Tibial artery (tissue), 4 donors: ENCODE measurements at regions of chr11 and their contacts with region 1.

Region 1: DNA sequence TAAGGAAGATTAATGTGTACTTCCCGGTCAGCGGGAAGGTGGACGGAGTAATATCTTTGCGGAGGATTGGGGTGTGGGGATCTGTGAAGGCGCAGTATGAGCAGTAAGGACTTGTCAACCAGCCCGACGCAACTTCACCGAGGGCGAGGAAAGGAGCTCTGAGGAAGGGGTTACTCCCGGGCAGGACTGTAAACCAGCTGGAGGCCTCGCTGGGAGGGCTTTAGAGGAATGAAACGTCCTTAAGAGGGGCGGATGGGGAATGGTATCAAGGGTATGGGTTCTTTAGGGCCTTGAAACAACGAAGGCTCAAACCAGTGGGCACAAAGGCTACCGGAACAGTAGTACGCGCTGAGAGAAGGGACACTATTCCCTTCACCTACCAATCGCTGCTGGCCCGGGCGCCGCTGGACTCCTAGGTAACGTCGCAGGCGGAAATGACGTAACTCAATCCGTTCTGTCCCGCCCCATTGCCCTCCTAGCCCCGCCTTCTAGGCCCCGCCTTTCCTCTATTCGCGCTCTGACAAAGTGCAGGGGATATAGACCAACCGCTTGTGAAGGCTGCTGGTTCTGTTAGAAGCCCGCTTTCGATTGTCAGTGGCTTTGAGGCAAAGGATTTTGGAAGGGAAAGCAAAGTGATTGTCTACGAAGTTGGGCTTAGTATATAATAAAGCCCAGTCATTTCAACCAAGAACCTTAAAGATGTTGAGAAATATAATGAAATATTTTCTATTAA is at the start of gene C11orf65:
- DNase-seq: peak; percentile 96 to 98
- H3K4me3 ChIP-seq: peak within 1 kb of the TSS; percentile 59 to 65
- H3K27ac ChIP-seq: peak within 1 kb of the TSS; percentile 93 to 94
- H3K4me1 ChIP-seq: peaks cover 0 to 7% (median 2%) of the 10 kb centered on the region in 4 donors
- H3K27me3 ChIP-seq: no peaks in the 10 kb centered on the region
- CTCF ChIP-seq: no peak

Region 2: DNA sequence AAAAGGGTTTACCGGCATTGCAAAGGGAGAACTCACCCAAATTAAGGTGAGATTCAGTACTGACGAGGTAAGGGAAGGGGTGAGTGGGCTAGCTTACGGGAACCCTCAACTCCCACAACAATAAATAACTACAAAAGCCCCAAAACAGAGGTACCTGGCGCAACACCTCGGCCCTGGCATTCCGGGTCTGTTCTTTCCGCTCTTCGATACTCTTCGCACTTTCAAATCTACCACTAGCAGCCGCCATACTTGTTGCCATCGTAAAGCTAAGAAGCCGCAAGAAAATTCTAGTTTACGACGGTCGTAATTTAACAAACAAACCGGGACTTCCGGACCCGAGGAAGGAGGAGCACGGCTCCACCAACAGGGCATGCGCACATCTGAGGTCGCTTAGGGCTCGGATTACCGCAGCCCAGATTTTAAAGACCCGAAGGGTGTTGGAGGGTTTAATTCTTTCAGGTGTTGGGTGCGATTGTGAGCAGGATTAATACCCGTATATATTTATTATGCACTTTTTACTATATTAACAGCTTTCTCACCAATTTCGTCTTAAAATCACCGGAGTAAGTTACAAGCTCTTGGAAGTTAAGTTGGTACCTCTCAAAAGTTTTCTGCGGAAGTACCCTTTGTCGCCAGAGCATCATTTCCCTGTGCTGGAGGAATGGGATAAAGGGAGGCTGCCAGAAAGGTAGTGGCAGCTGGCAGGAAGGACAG is 1009.5 kb before region 1 on chr11 and contains the start of gene CWF19L2:
- intact Hi-C with region 1: loop called (anchors 10 kb)
- DNase-seq: peak; percentile 83 to 91
- H3K4me3 ChIP-seq: peak within 1 kb of the TSS; percentile 66 to 75
- H3K27ac ChIP-seq: peak within 1 kb of the TSS; percentile 71 to 74
- H3K4me1 ChIP-seq: peaks cover 0 to 16% (median 8%) of the 10 kb centered on the region in 4 donors
- H3K27me3 ChIP-seq: no peaks in the 10 kb centered on the region
- CTCF ChIP-seq: peak in 1 of 2 experiments; percentile 12

Region 3: DNA sequence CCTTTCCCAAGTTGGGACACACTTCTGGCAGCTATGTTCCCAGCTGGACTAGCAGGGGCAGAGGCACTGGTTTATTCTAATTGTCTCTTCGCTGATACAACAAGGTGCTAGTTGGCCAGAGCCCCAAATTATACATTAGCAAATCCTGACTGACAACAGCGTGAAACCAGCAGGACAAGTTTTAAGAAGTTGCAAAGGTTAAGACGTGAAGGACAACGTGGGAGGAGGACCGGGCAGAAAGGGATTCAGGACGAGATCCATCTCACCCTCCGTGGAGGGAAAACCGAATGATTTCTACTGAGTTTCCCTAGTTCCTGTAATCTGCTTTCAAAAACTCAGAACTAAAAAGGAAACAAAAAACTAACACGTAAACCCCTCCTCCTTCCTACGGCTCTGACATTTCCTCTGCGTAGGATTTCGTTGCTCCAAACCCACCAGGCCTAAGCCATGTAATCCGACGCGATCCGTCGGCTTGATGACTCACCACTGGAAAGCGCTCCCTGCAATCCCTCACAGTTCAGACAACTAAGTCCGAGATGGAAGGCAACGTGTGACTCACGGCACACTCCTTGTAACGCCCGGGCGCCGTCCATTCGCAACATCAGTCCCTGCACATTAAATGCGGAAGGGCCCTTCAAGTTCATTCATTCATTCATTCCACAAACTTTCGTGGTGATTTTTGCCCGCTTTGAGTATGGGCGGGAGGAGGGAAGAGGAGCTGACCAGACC is 30.2 kb after region 1 on chr11:
- intact Hi-C with region 1: loop called (anchors 2 kb)
- DNase-seq: peak; percentile 93 to 94
- H3K4me3 ChIP-seq: peak overlapping the region; percentile 68 to 96
- H3K27ac ChIP-seq: peak overlapping the region; percentile 87 to 97
- H3K4me1 ChIP-seq: peaks cover 0 to 14% (median 6%) of the 10 kb centered on the region in 4 donors
- H3K27me3 ChIP-seq: no peaks in the 10 kb centered on the region
- CTCF ChIP-seq: no peak